Testis (tissue), 5 donors: ENCODE measurements at regions of chr15 and their contacts with region 1.

Region 1: DNA sequence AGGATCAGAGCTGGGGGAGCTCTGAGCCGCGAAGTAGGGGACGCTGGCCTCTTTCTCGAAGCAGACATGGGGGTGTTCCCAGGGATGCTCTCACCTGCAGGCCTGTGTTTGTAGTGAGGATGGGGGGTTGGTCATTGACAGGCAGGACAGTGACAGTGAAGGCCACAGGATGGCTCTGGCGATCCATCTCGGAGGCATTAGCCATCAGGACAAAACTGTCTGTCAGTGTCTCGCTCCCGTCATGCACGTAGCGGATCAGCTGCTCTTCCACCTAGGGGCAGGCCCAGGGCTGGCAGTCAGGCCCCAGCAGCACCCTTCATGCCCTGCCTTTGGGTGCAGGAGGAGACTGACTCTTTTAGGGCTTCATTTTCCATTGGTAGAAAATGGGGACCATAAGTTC is 28.0 kb downstream of the CSPG4 start:
- DNase-seq: no peak
- H3K4me3 ChIP-seq: no peak overlapping the region
- H3K27ac ChIP-seq: no peak overlapping the region
- H3K4me1 ChIP-seq: no peaks in the 10 kb centered on the region
- H3K27me3 ChIP-seq: no peaks in the 10 kb centered on the region
- CTCF ChIP-seq: no peak
- POLR2A ChIP-seq: no peak

Region 2: DNA sequence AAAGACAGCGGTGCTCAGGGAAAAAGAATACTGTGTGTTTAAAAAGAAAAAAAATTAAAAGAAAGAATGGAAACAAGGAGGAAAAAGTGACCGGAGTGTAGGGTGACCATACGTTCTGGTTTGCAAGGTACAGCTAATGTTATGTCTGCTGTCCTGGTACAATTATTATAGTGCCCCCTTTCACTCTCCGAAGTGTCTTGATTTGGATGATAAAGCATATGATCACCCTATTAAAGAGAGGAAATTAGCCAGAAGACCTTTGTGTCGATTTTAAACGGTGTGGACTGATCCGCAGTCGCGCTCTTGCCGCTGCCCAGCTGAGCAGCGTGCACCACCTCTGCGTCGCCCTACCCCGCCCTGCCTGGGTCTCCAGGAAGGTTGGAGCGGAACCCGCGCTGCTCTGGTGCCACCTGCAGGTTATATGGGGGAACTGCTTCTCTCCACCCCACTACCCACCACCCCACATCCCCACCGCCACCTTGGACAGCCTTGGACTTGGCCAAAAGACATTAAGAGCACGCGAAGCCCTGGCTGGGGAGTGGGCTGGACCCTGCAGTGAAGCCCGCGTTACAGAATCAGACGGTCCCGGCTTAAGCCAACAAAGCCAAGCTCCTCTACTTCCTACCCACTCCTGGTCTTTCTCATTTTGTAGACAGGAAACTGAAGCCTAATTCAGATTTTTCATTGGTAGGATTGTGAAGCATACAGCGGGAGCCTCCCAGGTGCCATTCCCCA is 117.4 kb after region 1 on chr15:
- intact Hi-C with region 1: loop called (anchors 5 kb)
- DNase-seq: peak; percentile 84
- H3K4me3 ChIP-seq: no peak overlapping the region
- H3K27ac ChIP-seq: no peak overlapping the region
- H3K4me1 ChIP-seq: no peaks in the 10 kb centered on the region
- H3K27me3 ChIP-seq: no peaks in the 10 kb centered on the region
- CTCF ChIP-seq: peak; percentile 44 to 98 (median 71)
- POLR2A ChIP-seq: no peak

Region 3: DNA sequence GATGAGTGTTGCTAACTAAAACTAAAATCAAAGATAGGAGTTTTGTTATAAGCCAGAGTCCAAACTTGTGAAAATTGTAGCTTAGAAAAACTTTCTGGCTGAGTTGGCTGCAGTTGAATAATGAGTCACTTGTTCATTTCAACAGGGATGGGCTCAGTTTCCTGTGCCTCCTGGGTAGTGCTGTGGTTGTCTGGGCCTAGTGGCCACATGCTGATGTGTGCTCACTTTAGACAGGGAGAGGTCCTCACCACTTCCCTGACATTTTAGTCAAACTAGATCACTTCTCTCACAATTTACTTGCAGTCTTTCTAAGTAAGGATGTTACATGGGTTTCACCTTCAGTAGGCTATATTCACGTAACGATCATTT is 152.3 kb after region 1 on chr15:
- intact Hi-C with region 1: no loop called
- DNase-seq: no peak
- H3K4me3 ChIP-seq: no peak overlapping the region
- H3K27ac ChIP-seq: no peak overlapping the region
- H3K4me1 ChIP-seq: peaks cover 8% of the 10 kb centered on the region
- H3K27me3 ChIP-seq: no peaks in the 10 kb centered on the region
- CTCF ChIP-seq: no peak
- POLR2A ChIP-seq: no peak